ENCODE measurements at regions of chr6 and their contacts with region 1.

Region 1: GRCh38 chr6:139375232-139376016 is 976 bp upstream of the CITED2 start:
- DNase-seq: peak; percentile 87
- H3K4me3 Mint-ChIP-seq: peak overlapping the region; percentile 86
- H3K27ac Mint-ChIP-seq: peak overlapping the region; percentile 87
- H3K4me1 Mint-ChIP-seq: peaks cover 36% of the 10 kb centered on the region
- H3K27me3 Mint-ChIP-seq: no peaks in the 10 kb centered on the region
- CTCF ChIP-seq: no peak

Region 2: GRCh38 chr6:139539852-139540251 is 164.4 kb after region 1 on chr6:
- CTCF ChIA-PET with region 1: interaction called, 4 read pairs
- intact Hi-C with region 1: loop called (anchors 10 kb)
- DNase-seq: peak; percentile 64
- H3K4me3 Mint-ChIP-seq: no peak overlapping the region
- H3K27ac Mint-ChIP-seq: peak overlapping the region; percentile 23
- H3K4me1 Mint-ChIP-seq: peaks cover 19% of the 10 kb centered on the region
- H3K27me3 Mint-ChIP-seq: no peaks in the 10 kb centered on the region
- CTCF ChIP-seq: no peak

Region 3: DNA sequence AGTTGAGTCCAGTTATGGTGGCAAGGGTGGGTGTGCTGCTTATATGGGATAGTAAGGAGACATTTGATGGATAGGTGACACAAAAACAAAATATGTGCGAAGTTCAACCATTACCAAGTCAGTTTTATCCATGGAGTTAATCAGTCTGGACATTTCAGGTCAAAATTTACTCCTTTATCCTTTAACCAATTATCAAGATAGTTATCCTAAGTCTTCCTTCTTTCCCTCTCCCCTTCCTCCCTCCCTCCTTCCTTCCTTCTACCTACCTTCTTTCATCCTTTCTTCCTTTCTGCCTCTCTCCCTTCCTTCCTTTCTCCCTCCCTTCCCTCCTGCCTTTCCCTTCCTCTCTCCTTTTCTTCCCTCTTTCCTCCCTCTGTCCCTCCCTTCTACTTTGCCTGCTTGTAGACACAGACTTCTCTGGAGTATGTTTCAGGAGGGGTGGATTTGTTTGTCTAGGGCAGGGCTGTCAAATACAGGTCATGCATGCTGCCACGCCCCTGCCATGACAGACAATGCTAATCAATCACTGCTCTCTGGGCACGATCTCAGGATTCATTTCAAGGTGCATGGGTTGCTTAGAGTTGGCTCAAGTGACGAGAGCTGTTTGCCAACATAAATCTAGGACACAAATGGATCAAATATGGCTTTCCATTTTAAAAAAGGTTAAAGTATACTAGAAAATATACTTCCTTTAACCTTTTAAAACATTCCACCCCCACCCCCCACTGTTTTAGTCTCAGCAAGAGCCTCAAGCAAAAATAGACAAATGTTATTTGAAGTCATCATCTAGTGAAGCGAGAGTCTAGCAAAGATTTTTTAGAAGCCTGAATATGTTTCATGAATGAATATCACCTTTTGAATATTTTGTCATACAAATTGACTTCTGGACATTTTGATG is 280.6 kb after region 1 on chr6:
- CTCF ChIA-PET with region 1: no interaction called
- intact Hi-C with region 1: loop called (anchors 5 kb)
- DNase-seq: peak; percentile 51
- H3K4me3 Mint-ChIP-seq: no peak overlapping the region
- H3K27ac Mint-ChIP-seq: peak overlapping the region; percentile 83
- H3K4me1 Mint-ChIP-seq: peaks cover 21% of the 10 kb centered on the region
- H3K27me3 Mint-ChIP-seq: no peaks in the 10 kb centered on the region
- CTCF ChIP-seq: no peak

Region 4: DNA sequence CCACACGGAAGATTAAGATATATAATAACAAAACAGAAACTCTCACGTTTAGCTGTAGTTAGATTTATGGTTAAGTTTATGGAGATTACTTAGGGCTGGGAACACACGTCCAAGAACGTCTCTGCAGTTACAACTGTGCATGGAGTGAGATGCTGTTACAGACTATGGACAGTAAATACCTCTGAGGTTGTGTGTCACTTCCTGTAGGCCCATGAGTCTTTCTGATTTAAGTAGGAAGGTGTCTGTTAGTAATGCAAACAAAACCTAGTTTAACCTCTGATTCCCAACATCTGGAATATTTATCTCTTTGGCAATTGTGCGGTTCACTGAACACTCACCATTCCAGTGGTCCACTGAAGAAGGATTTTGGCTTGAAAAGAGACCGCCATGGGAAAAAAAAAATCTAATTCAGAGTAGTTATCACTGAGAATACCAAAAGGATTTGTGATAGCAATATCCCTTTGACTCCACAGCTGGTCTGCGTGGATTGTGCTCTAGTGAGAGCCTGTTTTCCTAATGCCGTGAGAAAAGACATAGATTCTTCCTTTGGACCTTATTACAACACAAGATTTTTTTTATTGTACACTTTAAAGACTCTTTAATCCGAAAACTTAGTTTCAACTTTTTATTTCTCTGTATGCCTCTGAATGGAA is 477.2 kb after region 1 on chr6:
- CTCF ChIA-PET with region 1: no interaction called
- intact Hi-C with region 1: loop called (anchors 5 kb)
- DNase-seq: no peak
- H3K4me3 Mint-ChIP-seq: no peak overlapping the region
- H3K27ac Mint-ChIP-seq: no peak overlapping the region
- H3K4me1 Mint-ChIP-seq: peaks cover 36% of the 10 kb centered on the region
- H3K27me3 Mint-ChIP-seq: no peaks in the 10 kb centered on the region
- CTCF ChIP-seq: no peak

Region 5: GRCh38 chr6:139981768-139982181 is 606.4 kb after region 1 on chr6:
- CTCF ChIA-PET with region 1: no interaction called
- intact Hi-C with region 1: loop called (anchors 5 kb)
- DNase-seq: peak; percentile 45
- H3K4me3 Mint-ChIP-seq: no peak overlapping the region
- H3K27ac Mint-ChIP-seq: no peak overlapping the region
- H3K4me1 Mint-ChIP-seq: peaks cover 66% of the 10 kb centered on the region
- H3K27me3 Mint-ChIP-seq: no peaks in the 10 kb centered on the region
- CTCF ChIP-seq: no peak

Region 6: DNA sequence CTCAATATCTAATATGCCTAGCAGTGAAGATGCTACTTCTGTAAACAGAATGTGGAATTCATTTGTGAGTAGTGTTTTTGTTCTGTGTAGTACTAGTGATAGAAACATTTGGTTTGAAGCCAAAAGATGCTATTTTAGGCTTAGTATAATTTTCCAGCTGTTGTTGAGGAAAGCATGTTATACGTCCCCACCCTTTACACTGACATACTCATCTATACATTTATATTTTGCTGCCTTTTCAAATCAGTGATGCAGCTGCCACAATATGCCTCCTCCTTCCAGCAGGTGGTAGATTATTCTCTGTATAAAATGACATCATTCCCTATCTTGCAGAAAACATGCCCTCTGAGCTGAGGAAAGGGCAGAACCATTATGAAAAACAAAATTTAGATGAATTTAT is 1539.7 kb after region 1 on chr6:
- CTCF ChIA-PET with region 1: interaction called, 4 read pairs
- intact Hi-C with region 1: loop called (anchors 5 kb)
- DNase-seq: no peak
- H3K4me3 Mint-ChIP-seq: no peak overlapping the region
- H3K27ac Mint-ChIP-seq: no peak overlapping the region
- H3K4me1 Mint-ChIP-seq: peaks cover 15% of the 10 kb centered on the region
- H3K27me3 Mint-ChIP-seq: no peaks in the 10 kb centered on the region
- CTCF ChIP-seq: no peak

Measured in Calu3 (cell line).